Left colon (tissue), 2 donors: ENCODE measurements at regions of chr22 and their contacts with region 1.

Region 1: GRCh38 chr22:19824197-19825015 is 30.3 kb downstream of the GNB1L start:
- DNase-seq: no peak
- ATAC-seq: no peak

Region 2: GRCh38 chr22:19663286-19663815 is 161.1 kb before region 1 on chr22:
- intact Hi-C with region 1: no loop called
- DNase-seq: peak in 1 of 2 donors; percentile 69
- ATAC-seq: peak; percentile 77

Region 3: DNA sequence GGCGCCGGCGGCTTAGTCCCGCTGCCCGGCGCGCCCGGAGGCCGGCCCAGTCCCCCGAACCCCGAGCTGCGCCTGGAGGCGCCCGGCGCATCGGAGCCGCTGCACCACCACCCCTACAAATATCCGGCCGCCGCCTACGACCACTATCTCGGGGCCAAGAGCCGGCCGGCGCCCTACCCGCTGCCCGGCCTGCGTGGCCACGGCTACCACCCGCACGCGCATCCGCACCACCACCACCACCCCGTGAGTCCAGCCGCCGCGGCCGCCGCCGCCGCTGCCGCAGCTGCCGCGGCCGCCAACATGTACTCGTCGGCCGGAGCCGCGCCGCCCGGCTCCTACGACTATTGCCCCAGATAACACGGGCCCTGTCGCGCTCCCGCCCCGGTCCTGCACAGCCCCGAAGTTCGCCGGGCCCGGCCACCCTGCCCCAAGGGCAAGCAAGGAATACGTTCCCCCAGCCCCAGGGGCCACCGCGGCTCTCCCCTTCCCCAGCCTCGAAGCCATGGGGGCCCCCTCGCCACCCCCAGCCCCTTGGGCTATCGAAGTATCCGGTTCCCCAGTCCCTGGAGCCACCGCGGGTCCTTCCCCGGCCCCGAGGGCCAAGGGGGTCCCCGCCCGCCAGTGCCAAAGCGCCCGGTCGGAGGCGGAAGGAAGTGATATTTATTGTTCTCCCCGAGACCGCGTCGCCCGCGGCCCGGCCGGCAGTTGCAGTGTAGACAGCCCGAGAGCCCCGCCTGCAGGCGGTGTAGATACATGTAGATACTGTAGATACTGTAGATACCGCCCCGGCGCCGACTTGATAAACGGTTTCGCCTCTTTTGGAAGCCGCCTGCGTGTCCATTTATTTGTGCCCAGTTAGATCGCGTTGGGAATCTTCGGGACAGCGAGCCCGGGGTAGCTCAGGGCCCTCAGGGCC is 57.6 kb before region 1 on chr22:
- intact Hi-C with region 1: loop called in 1 of 2 experiments (anchors 10 kb)
- DNase-seq: peak; percentile 42 to 79
- ATAC-seq: peak; percentile 83